Endothelial cell of umbilical vein (primary cell): ENCODE measurements at regions of chr2 and their contacts with region 1.

Region 1: DNA sequence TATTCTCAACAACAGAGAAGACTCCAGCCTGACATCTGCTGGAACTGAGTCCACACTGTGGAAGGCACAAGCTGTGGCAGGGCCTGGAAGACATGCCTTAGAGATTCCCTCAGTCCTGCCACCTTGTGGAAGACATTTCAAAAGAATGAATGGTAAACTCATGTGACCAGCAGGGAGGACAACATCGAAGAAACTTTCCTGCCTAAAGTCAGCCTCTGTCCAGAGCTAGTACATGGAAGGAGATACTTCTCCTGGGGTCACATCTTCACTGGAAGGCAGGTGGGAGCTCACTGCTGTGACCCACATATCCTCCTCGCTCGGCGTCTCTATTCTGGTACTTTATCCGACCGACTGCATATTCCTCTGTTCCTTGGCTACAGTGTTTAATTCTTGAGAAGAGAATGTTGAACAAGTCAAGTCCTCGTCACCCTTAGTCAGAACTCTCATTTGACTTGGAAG is 59.5 kb downstream of the PUM2 start:
- DNase-seq: peak; percentile 83
- H3K4me3 ChIP-seq: no peak overlapping the region
- H3K27ac ChIP-seq: no peak overlapping the region
- H3K4me1 ChIP-seq: peaks cover 14% of the 10 kb centered on the region
- H3K27me3 ChIP-seq: no peaks in the 10 kb centered on the region
- CTCF ChIP-seq: peak; percentile 67 to 72
- POLR2A ChIP-seq: no peak

Region 2: GRCh38 chr2:18860179-18860578 is 1431.0 kb before region 1 on chr2:
- CTCF ChIA-PET with region 1: no interaction called
- POLR2A ChIA-PET with region 1: no interaction called
- dilution Hi-C with region 1: no loop called
- intact Hi-C with region 1: no loop called
- DNase-seq: no peak
- H3K4me3 ChIP-seq: no peak overlapping the region
- H3K27ac ChIP-seq: no peak overlapping the region
- H3K4me1 ChIP-seq: no peaks in the 10 kb centered on the region
- H3K27me3 ChIP-seq: no peaks in the 10 kb centered on the region
- CTCF ChIP-seq: no peak
- POLR2A ChIP-seq: no peak

Region 3: GRCh38 chr2:20106746-20107145 is 184.4 kb before region 1 on chr2:
- CTCF ChIA-PET with region 1: interaction called, 19 read pairs
- POLR2A ChIA-PET with region 1: no interaction called
- dilution Hi-C with region 1: no loop called
- intact Hi-C with region 1: loop called (anchors 1 kb)
- DNase-seq: peak; percentile 27
- H3K4me3 ChIP-seq: peak overlapping the region in 1 of 3 experiments; percentile 26
- H3K27ac ChIP-seq: no peak overlapping the region
- H3K4me1 ChIP-seq: no peaks in the 10 kb centered on the region
- H3K27me3 ChIP-seq: peaks cover 2 to 3% of the 10 kb centered on the region in 2 experiments
- CTCF ChIP-seq: peak; percentile 47 to 80
- POLR2A ChIP-seq: no peak

Region 4: GRCh38 chr2:20304411-20304810 is 13.3 kb after region 1 on chr2:
- CTCF ChIA-PET with region 1: interaction called, 23 read pairs
- POLR2A ChIA-PET with region 1: interaction called, 3 read pairs
- dilution Hi-C with region 1: no loop called
- intact Hi-C with region 1: loop called (anchors 2 kb)
- DNase-seq: no peak
- H3K4me3 ChIP-seq: no peak overlapping the region
- H3K27ac ChIP-seq: no peak overlapping the region
- H3K4me1 ChIP-seq: no peaks in the 10 kb centered on the region
- H3K27me3 ChIP-seq: no peaks in the 10 kb centered on the region
- CTCF ChIP-seq: no peak
- POLR2A ChIP-seq: no peak

Region 5: DNA sequence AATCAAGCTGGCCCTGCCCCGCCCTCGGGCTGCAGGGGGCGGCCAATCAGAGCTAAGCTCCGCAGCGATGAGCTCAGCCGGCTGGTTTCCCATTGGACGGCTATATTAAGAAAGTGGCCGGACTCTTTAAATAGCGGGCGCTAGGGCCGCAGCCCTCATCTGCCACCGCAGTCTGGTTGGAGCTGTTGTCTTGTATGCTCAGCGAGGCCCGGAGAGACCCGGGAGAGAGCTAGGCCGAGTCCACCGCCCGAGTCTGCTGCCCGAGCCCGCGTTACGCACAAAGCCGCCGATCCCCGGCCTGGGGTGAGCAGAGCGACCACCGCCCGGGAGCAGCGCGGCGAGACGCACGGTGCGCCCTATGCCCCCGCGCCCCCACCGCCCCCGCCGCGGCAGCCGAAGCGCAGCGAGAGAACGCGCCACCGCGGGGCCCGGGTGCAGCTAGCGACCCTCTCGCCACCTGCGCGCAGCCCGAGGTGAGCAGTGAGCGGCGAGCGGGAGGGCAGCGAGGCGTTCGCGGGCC is 155.8 kb after region 1 on chr2 and contains the start of gene RHOB:
- CTCF ChIA-PET with region 1: no interaction called
- POLR2A ChIA-PET with region 1: no interaction called
- dilution Hi-C with region 1: no loop called
- intact Hi-C with region 1: no loop called
- DNase-seq: peak; percentile 99
- H3K4me3 ChIP-seq: peak within 1 kb of the TSS; percentile 66 to 96 (median 94)
- H3K27ac ChIP-seq: peak within 1 kb of the TSS; percentile 79
- H3K4me1 ChIP-seq: peaks cover 27% of the 10 kb centered on the region
- H3K27me3 ChIP-seq: no peaks in the 10 kb centered on the region
- CTCF ChIP-seq: no peak
- POLR2A ChIP-seq: peak; percentile 100
- total RNA-seq, gene RHOB: 830 and 937 TPM in 2 replicates